ENCODE measurements at regions of chr9 and their contacts with region 1.

Region 1: DNA sequence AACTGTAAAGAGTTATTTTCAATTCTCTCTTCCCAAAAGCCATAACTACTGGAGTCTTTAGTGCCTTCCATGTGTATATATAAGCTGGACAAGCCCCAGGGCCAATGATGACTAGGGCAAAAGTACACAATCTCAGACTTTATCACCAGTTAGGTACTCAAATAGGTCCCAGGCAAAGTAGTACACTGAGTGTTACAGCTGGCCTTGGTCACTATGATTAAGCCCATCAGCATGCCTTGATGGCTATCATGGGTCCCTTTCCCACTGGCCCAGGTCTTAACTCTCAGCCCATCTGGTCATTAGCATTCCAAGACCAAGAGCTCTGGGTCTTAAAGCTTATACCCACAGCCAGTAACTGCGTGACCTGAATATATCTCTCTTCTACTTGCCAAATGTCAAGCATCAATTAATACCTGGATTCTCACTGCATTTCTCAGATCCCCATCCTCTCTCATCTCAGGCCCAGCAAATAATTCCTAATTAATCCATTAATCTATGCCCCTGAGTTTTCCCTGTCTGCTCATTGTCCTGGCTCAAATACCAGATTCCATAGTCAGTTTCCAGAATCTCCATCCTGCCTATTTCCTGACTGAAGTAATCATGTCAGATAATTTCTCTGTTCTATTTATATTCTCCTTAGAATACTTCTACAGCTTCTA is 62.3 kb downstream of the NR6A1 start:
- DNase-seq: no peak
- H3K4me3 ChIP-seq: no peak overlapping the region
- CTCF ChIP-seq: no peak

Region 2: DNA sequence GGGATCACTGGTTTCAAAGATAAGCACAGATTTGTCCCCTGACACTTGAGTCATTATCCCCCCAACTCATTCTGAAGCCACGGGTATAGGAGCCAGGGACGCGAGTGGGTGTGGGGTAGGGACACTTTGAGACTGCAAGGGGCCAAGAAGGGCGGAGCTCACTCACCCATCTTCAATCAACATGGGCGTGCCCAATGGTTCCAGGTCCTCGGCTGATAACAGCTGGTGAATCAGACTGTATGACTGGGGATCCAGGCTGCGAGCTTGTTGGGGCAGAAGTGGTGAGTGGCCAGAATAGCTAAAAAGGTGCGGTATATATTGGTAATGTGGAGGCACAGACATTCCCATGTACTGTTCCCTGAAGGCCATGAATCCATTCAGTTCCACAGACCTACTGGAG is 170.8 kb before region 1 on chr9:
- CTCF ChIA-PET with region 1: interaction called, 25 read pairs
- POLR2A ChIA-PET with region 1: no interaction called
- DNase-seq: no peak
- H3K4me3 ChIP-seq: no peak overlapping the region
- CTCF ChIP-seq: no peak

Region 3: DNA sequence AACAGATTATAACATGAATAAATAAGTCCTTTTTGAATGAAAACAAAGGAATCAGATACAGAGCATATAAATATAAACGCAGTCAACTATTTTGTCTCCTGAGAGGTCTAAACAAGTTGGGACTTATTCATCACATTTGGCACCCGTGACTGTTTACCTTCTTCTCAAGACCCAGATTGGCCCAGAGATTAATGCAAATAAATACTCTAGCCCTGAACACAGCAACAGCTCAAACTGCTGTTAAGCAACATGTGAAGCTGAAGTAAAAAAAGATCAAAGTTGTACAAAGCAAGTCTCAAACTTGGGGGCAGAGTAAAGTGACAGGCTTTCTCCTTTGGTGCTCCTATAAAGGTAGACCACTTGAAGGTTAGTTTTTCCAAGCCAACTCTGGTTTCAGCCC is 106.6 kb before region 1 on chr9:
- CTCF ChIA-PET with region 1: interaction called, 12 read pairs
- POLR2A ChIA-PET with region 1: no interaction called
- DNase-seq: no peak
- H3K4me3 ChIP-seq: no peak overlapping the region
- CTCF ChIP-seq: no peak

Region 4: GRCh38 chr9:124676159-124676551 is 32.6 kb before region 1 on chr9:
- CTCF ChIA-PET with region 1: interaction called, 12 read pairs
- POLR2A ChIA-PET with region 1: no interaction called
- DNase-seq: no peak
- H3K4me3 ChIP-seq: no peak overlapping the region
- CTCF ChIP-seq: no peak

Region 5: GRCh38 chr9:124743686-124744348 is 35.1 kb after region 1 on chr9:
- CTCF ChIA-PET with region 1: interaction called, 42 read pairs
- POLR2A ChIA-PET with region 1: no interaction called
- DNase-seq: no peak
- H3K4me3 ChIP-seq: no peak overlapping the region
- CTCF ChIP-seq: no peak

Measured in AG04449 (cell line).